PC-9 (cell line): ENCODE measurements at regions of chr7 and their contacts with region 1.

Region 1: DNA sequence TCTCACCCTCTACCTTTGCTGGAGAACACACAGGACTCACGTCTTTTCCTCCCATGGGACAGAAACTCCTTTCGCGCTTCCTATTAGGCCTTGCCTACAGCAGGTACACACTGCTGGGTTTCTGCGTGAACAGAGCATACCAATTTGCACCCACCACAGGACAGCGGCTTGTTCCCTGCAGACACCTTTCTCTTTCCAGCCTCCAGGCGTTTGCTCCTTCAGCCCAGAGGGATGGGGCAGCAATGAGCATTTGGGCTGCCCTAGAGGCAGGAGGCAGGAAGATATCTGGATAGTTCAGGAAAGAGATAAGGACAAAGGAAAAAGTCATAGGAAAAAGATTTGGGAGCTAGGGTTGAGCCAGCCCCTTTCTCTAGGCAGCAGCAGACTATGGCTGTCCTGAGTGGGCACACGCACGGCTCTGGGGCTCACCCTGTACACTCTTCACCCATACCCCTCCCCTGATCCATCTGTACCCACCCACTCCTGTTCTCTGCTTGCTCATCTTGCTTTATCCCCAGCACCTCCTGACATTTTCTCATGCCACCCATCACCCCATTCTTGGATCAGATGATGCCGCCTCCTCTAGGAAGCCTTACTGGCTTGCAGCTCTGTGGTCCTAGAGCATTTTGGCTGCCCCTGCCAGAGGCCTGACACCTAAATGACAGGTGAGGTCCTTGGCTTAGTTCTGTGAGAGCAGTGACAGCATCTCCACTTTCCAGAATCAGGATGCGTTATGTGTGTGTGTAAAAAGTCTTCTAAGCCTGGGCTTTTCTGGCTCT is 40.7 kb upstream of the SPDYE3 start:
- DNase-seq: no peak
- H3K4me3 ChIP-seq: no peak overlapping the region
- H3K27ac ChIP-seq: no peak overlapping the region
- H3K4me1 ChIP-seq: peaks cover 63% of the 10 kb centered on the region
- H3K27me3 ChIP-seq: no peaks in the 10 kb centered on the region
- CTCF ChIP-seq: no peak

Region 2: GRCh38 chr7:99597762-99598501 is 668.8 kb before region 1 on chr7 and contains the start of gene TMEM225B:
- CTCF ChIA-PET with region 1: no interaction called
- POLR2A ChIA-PET with region 1: no interaction called
- intact Hi-C with region 1: no loop called
- DNase-seq: no peak
- H3K4me3 ChIP-seq: no peak within 1 kb of the TSS
- H3K27ac ChIP-seq: no peak within 1 kb of the TSS
- H3K4me1 ChIP-seq: no peaks in the 10 kb centered on the region
- H3K27me3 ChIP-seq: 0 out of 2 replicates have a peak, but pooled peaks cover 6% of the 10 kb centered on the region
- CTCF ChIP-seq: no peak
- total RNA-seq, gene TMEM225B: 1.5 and 1.8 TPM in 2 replicates

Region 3: DNA sequence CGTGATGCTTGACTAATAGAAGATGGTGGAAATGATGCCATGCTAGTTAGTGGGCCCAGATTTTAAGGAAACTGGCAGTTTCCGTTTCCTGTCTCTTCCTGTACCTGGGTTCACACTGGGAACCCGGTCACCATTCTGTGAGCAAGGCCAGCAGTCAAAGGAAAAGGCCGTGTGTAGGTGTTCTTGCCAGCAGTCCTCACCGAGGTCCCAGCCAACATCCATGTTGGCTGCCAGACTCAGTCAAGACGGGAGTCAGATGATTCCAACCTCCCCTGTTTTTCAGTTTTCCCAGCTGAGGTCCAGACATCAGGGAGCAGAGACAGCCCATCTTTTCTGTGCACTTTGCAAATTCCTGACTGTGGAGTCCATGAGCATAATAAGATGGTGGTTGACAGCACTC is 76.0 kb after region 1 on chr7:
- CTCF ChIA-PET with region 1: interaction called, 5 read pairs
- POLR2A ChIA-PET with region 1: interaction called, 3 read pairs
- intact Hi-C with region 1: loop called (anchors 2 kb)
- DNase-seq: no peak
- H3K4me3 ChIP-seq: no peak overlapping the region
- H3K27ac ChIP-seq: no peak overlapping the region
- H3K4me1 ChIP-seq: peaks cover 60% of the 10 kb centered on the region
- H3K27me3 ChIP-seq: no peaks in the 10 kb centered on the region
- CTCF ChIP-seq: no peak